Activated CD8-positive, alpha-beta memory T cell treated with anti-CD3 and anti-CD28 coated beads, Interleukin-2, amount 10 ng/mL, durations not matched to agents 7 days and 5 days (primary cell): ENCODE measurements at regions of chr5 and their contacts with region 1.

Region 1: GRCh38 chr5:157718519-157718918 is 12.7 kb upstream of the THG1L start:
- DNase-seq: no peak
- ATAC-seq: peak; percentile 96
- H3K4me3 Mint-ChIP-seq: no peak overlapping the region
- H3K27ac Mint-ChIP-seq: peak overlapping the region; percentile 75
- H3K4me1 Mint-ChIP-seq: peaks cover 33% of the 10 kb centered on the region
- H3K27me3 Mint-ChIP-seq: no peaks in the 10 kb centered on the region

Region 2: GRCh38 chr5:157431544-157432200 is 286.8 kb before region 1 on chr5:
- CTCF ChIA-PET with region 1: interaction called, 45 read pairs
- DNase-seq: peak; percentile 51
- ATAC-seq: peak; percentile 97
- H3K4me3 Mint-ChIP-seq: no peak overlapping the region
- H3K27ac Mint-ChIP-seq: no peak overlapping the region
- H3K4me1 Mint-ChIP-seq: peaks cover 5% of the 10 kb centered on the region
- H3K27me3 Mint-ChIP-seq: peaks cover 20% of the 10 kb centered on the region

Region 3: DNA sequence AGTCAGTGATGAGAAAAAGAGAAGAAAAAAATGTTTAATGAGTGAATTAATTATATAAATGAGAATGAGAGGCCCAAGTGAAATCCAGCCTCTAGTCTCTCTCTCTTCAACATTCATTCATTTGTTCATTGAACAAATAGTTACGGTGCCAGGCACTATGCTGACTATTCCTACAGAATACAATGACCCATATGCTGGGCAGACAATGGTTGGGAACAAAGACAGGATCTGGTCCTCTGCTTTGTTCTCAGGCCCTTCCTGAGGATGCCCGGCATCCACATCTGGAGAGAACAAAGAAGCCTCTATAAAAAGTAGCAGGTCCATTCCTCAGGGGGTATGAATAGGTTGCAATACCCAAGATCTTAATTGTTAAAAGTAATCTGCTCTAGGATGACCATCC is 149.8 kb before region 1 on chr5:
- CTCF ChIA-PET with region 1: interaction called, 11 read pairs
- DNase-seq: no peak
- ATAC-seq: no peak
- H3K4me3 Mint-ChIP-seq: no peak overlapping the region
- H3K27ac Mint-ChIP-seq: peak overlapping the region; percentile 58
- H3K4me1 Mint-ChIP-seq: peaks cover 76% of the 10 kb centered on the region
- H3K27me3 Mint-ChIP-seq: no peaks in the 10 kb centered on the region

Region 4: DNA sequence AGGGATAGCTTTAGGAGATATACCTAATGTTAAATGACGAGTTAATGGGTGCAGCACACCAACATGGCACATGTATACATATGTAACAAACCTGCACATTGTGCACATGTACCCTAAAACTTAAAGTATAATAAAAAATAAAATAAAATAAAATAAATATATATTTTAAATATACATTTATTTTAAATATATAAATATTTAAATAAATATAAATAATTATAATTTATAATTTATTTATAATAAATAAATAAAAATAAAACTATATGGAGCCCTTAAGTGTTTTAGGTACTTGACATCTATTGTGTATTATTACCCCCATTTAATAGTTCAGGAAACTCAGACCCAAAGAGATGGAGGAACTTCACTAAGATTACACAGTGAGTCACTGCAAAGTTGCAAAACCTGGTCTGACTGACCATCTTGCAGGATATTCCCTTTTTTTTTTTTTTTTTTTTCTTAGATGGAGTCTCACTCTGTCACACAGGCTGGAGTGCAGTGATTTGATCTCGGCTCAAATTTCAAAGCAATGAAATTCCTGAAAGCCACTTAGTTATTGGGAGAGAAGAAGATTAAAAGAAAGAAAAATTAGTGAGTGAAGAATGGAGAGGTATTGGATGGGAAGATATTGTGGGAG is 52.9 kb before region 1 on chr5:
- CTCF ChIA-PET with region 1: interaction called, 28 read pairs
- DNase-seq: no peak
- ATAC-seq: no peak
- H3K4me3 Mint-ChIP-seq: no peak overlapping the region
- H3K27ac Mint-ChIP-seq: no peak overlapping the region
- H3K4me1 Mint-ChIP-seq: peaks cover 9% of the 10 kb centered on the region
- H3K27me3 Mint-ChIP-seq: peaks cover 9% of the 10 kb centered on the region

Region 5: GRCh38 chr5:157731272-157732129 is 13.0 kb after region 1 on chr5 and contains the start of gene THG1L:
- CTCF ChIA-PET with region 1: interaction called, 16 read pairs
- DNase-seq: peak; percentile 99
- ATAC-seq: peak; percentile 97
- H3K4me3 Mint-ChIP-seq: peak within 1 kb of the TSS; percentile 92
- H3K27ac Mint-ChIP-seq: peak within 1 kb of the TSS; percentile 95
- H3K4me1 Mint-ChIP-seq: peaks cover 20% of the 10 kb centered on the region
- H3K27me3 Mint-ChIP-seq: no peaks in the 10 kb centered on the region
- total RNA-seq, gene THG1L: 12.9 to 16.3 TPM

Region 6: GRCh38 chr5:157948738-157949410 is 230.4 kb after region 1 on chr5:
- CTCF ChIA-PET with region 1: no interaction called
- DNase-seq: peak; percentile 84
- ATAC-seq: peak; percentile 96
- H3K4me3 Mint-ChIP-seq: peak overlapping the region; percentile 0
- H3K27ac Mint-ChIP-seq: no peak overlapping the region
- H3K4me1 Mint-ChIP-seq: peaks cover 4% of the 10 kb centered on the region
- H3K27me3 Mint-ChIP-seq: peaks cover 26% of the 10 kb centered on the region